ENCODE measurements at regions of chr19 and their contacts with region 1.

Region 1: GRCh38 chr19:12983542-12984142 is 11.6 kb upstream of the NFIX start:
- DNase-seq: peak; percentile 81
- H3K4me3 Mint-ChIP-seq: no peak overlapping the region
- H3K27ac Mint-ChIP-seq: no peak overlapping the region
- H3K4me1 Mint-ChIP-seq: no peaks in the 10 kb centered on the region
- H3K27me3 Mint-ChIP-seq: no peaks in the 10 kb centered on the region

Region 2: DNA sequence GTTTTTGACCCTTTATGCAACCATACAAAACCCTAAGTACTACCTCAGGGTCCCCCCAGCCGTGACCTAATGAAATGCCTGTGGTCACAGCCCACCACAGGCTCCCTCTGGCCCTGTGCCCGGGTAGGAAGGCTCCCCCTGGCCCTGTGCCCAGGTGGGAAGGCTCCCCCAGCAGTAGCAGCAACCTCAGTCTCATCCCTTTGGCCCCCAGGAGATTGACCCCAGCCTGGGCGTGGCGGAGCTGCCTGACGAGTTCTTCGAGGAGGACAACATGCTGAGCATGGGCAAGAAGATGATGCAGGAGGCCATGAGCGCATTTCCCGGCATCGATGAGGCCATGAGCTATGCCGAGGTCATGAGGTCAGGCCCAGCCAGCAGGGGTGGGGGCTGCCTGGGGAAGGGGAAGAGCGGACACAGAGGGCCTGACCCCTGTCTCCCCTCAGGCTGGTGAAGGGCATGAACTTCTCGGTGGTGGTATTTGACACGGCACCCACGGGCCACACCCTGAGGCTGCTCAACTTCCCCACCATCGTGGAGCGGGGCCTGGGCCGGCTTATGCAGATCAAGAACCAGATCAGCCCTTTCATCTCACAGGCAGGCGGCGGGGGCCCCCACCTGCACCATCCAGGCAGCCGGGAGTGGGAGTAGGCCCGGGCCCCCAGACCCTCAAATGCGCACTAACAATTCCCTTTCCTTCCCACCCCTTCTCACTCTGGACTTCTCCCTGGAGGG is 238.3 kb before region 1 on chr19:
- CTCF ChIA-PET with region 1: no interaction called
- intact Hi-C with region 1: no loop called
- DNase-seq: no peak
- H3K4me3 Mint-ChIP-seq: no peak overlapping the region
- H3K27ac Mint-ChIP-seq: no peak overlapping the region
- H3K4me1 Mint-ChIP-seq: peaks cover 3% of the 10 kb centered on the region
- H3K27me3 Mint-ChIP-seq: peaks cover 4% of the 10 kb centered on the region

Region 3: DNA sequence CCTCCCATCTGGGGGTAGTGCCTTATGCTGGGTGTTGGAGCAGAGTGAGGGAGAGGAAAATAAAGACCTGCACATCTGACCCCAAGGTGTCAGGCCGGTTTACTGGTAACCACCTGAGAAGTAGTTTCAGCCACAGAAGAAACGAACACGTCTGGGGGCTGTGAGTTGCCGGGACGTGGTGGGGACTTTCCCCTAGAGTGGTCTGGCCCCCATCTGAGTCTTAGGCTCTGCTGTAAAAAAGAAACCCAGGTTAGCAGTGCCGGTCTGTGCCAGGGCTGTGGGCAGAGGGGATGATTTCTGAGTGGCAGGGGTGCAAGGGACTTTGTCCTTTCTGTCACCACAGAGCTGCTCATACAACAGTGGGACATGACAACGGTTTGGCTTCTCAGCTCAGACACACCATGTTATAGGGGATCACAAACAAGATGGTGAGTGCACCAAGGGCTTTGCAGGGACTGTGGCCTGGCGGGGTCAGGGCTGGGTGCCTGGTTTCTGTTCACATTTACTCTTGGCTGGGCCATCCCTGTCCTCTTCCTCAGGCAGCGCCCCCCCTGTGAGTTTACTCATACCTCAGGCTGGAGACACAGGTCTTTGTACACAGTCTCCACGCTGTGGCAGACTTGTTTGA is 83.6 kb before region 1 on chr19:
- CTCF ChIA-PET with region 1: no interaction called
- intact Hi-C with region 1: no loop called
- DNase-seq: no peak
- H3K4me3 Mint-ChIP-seq: no peak overlapping the region
- H3K27ac Mint-ChIP-seq: no peak overlapping the region
- H3K4me1 Mint-ChIP-seq: no peaks in the 10 kb centered on the region
- H3K27me3 Mint-ChIP-seq: no peaks in the 10 kb centered on the region

Region 4: DNA sequence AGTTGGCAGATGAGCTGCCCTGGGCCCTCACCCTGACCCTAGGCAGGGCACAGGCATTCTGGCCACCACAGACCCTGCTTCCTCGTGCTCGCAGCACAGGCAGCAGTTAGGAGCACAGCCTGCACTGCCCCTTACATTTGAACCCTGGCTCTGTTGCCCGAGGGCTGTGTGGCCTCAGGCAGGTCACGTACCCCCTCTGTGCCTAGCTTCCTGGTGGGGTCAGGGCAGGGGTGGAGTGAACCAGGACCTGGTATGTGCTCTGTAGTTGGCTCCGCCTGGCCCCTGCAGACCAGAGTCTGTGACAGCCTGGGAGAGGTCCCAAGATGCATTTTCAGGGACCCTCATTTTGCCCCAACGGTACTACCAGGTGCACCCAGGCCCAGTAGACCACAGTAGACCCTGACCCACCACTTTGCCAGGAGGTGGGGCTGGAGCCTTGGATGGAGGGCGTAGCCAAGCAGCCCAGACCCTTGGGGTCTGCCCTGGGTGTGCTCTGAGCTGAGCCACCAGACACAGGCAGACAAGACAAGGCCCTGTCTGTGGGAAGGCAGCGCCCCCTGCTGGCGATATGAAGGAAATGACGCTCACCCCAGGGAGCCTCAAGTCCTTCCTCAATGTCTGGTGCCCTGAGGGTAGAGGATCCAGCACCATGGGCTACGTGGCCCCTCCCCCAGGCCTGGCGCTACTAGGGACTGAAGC is 109.9 kb after region 1 on chr19:
- CTCF ChIA-PET with region 1: interaction called, 92 read pairs
- intact Hi-C with region 1: loop called (anchors 1 kb)
- DNase-seq: peak; percentile 90
- H3K4me3 Mint-ChIP-seq: no peak overlapping the region
- H3K27ac Mint-ChIP-seq: no peak overlapping the region
- H3K4me1 Mint-ChIP-seq: peaks cover 21% of the 10 kb centered on the region
- H3K27me3 Mint-ChIP-seq: peaks cover 29% of the 10 kb centered on the region

Region 5: DNA sequence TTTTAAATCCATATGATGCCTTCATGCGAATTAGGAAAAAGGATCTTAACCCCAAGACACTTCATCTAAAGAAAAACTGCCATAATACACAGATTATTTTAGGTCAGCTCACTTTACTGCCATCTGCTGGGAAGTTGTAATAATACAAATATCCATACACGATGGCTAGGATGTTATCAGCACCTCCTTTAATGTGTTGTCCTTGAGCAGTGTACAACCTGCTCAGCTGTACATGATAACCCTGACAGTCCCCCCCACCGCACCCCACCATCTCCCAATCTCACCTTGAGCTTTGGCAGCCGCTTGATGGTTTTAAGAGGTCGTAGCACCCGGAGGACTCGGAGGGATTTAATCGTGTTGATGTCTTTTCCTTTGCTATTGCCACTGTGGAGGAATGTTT is 278.8 kb after region 1 on chr19:
- CTCF ChIA-PET with region 1: interaction called, 8 read pairs
- intact Hi-C with region 1: loop called (anchors 2 kb)
- DNase-seq: no peak
- H3K4me3 Mint-ChIP-seq: no peak overlapping the region
- H3K27ac Mint-ChIP-seq: no peak overlapping the region
- H3K4me1 Mint-ChIP-seq: peaks cover 15% of the 10 kb centered on the region
- H3K27me3 Mint-ChIP-seq: peaks cover 9% of the 10 kb centered on the region